Endothelial cell of umbilical vein (primary cell): ENCODE measurements at regions of chr16 and their contacts with region 1.

Region 1: GRCh38 chr16:24700549-24701392 is 28.7 kb upstream of the TNRC6A start:
- DNase-seq: peak; percentile 94
- H3K4me3 ChIP-seq: no peak overlapping the region
- H3K27ac ChIP-seq: peak overlapping the region; percentile 81
- H3K4me1 ChIP-seq: peaks cover 20% of the 10 kb centered on the region
- H3K27me3 ChIP-seq: no peaks in the 10 kb centered on the region
- CTCF ChIP-seq: peak; percentile 26 to 58
- POLR2A ChIP-seq: no peak

Region 2: GRCh38 chr16:24178496-24178895 is 522.3 kb before region 1 on chr16:
- CTCF ChIA-PET with region 1: no interaction called
- POLR2A ChIA-PET with region 1: no interaction called
- dilution Hi-C with region 1: no loop called
- intact Hi-C with region 1: no loop called
- DNase-seq: no peak
- H3K4me3 ChIP-seq: no peak overlapping the region
- H3K27ac ChIP-seq: no peak overlapping the region
- H3K4me1 ChIP-seq: no peaks in the 10 kb centered on the region
- H3K27me3 ChIP-seq: no peaks in the 10 kb centered on the region
- CTCF ChIP-seq: no peak
- POLR2A ChIP-seq: no peak

Region 3: DNA sequence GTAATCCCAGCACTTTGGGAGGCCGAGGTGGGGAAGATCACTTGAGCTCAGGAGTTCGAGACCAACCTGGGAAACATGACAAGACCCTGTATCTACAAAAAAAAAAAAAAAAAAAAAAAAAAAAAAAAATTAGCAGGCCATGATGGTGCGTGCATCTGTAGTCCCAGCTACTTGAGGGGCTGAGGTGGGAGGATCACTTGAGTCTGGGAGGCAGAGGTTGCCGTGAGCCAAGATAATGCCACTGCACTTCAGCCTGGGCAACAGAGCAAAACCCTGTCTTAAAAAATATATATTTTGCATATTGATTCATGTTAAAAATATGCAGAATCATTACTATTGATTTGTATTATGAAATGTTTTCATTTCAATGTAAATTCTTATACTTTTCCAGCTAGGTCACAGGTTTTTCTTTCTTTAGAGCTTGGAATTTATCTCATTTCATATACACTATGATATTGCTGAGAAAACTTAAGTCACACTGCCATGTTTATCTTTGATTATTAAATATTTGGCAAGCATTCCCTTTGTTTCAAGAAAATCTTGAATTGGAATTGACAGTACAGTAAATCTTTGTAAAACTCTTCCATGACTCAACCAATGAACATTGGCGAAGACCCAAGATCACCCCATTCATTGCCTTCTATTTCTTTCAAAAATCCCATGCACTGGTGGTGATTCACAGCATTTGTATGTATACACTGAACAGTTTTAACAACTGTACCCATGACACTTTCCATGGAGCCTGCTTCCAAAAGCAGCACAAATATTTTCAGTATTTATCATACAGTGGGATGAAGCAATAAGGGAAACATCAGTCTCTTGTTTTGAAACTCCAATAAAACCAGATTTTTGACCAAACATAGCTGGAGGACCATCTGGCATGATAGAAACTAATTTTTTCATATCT is 54.8 kb before region 1 on chr16:
- CTCF ChIA-PET with region 1: no interaction called
- POLR2A ChIA-PET with region 1: no interaction called
- dilution Hi-C with region 1: no loop called
- intact Hi-C with region 1: loop called (anchors 1 kb)
- DNase-seq: peak; percentile 99
- H3K4me3 ChIP-seq: no peak overlapping the region
- H3K27ac ChIP-seq: peak overlapping the region; percentile 71
- H3K4me1 ChIP-seq: peaks cover 14% of the 10 kb centered on the region
- H3K27me3 ChIP-seq: no peaks in the 10 kb centered on the region
- CTCF ChIP-seq: no peak
- POLR2A ChIP-seq: no peak

Region 4: DNA sequence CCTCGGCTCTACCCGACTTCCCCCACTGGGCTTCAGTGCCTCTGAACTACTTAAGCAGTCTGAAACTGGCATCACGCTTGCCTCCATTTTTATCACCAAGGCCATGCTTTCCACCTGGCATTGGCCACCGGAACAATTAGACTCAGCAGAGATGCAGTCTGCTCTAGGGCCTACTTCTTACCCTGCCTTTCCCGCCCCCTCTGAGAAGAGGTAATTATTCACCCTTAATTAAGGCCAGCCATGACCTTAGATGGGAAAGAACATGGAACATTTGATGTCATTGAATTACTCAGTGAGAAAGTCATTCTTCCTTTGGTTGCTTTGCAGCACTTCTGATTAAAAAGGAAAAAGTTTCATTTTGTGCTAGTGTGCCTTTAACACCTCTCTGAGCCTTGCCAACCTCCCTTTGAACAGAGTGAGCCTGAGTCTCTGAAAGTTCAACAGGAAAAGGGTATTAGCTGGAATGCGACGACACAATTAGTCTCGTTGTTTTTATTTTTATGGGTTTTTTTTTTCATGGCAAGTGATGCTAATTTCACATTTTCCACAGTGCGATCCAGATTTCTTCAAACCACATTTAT is 32.2 kb before region 1 on chr16:
- CTCF ChIA-PET with region 1: interaction called, 3 read pairs
- POLR2A ChIA-PET with region 1: interaction called, 3 read pairs
- dilution Hi-C with region 1: no loop called
- intact Hi-C with region 1: loop called (anchors 1 kb)
- DNase-seq: peak; percentile 87
- H3K4me3 ChIP-seq: no peak overlapping the region
- H3K27ac ChIP-seq: peak overlapping the region; percentile 85
- H3K4me1 ChIP-seq: peaks cover 14% of the 10 kb centered on the region
- H3K27me3 ChIP-seq: no peaks in the 10 kb centered on the region
- CTCF ChIP-seq: no peak
- POLR2A ChIP-seq: no peak

Region 5: DNA sequence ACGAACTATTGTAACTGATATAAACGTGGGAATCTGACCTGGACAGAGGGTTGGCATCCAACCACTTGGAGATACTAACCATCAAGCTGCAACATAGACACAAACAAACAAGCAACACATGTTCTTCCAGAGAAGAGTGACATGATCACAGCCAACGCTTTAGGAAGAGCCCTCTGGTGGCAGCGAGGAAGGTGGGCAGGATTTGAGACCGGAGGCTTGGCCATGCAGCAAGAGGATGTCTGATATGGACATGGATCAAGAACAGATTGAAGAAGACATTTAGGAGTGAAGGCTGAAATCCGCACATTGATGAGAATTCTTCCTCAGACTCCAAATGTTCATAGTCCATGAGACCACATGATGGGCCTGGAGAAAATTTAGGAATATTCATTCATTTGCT is 11.6 kb before region 1 on chr16:
- CTCF ChIA-PET with region 1: interaction called, 12 read pairs
- POLR2A ChIA-PET with region 1: no interaction called
- dilution Hi-C with region 1: no loop called
- intact Hi-C with region 1: loop called (anchors 2 kb)
- DNase-seq: peak; percentile 42
- H3K4me3 ChIP-seq: no peak overlapping the region
- H3K27ac ChIP-seq: no peak overlapping the region
- H3K4me1 ChIP-seq: peaks cover 14% of the 10 kb centered on the region
- H3K27me3 ChIP-seq: no peaks in the 10 kb centered on the region
- CTCF ChIP-seq: peak; percentile 56
- POLR2A ChIP-seq: no peak

Region 6: DNA sequence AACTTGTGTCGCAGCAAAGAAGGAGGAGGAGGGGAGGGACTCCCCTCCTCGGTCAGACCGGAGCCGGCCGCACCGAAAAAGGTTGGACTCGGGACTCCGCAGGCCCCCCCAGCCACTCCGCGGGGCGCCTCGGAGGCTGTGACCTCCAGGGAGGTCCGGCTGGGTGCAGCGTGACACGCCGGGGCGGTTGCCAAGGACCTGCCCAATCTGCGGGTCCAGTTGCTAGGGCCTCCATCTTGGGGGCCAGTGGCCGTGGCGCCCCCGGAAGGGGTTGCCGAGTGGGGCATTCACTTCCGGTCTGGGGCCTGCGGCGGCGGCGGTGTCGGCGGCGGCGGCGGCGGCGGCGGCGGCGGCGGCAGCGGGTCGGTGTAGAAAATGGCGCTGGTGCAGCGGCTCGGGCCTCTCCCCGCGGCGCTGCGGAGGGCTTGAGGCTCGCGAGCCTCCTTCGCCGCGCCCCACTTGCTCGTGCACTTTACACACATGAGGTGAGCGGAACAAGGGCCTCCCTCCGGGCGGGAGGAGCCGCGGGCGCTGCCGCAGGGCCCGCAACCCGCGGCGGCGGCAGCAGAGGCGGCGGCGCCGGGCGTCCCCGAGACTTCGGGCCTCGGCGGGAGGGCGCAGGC is 28.7 kb after region 1 on chr16 and contains the start of gene TNRC6A:
- CTCF ChIA-PET with region 1: interaction called, 3 read pairs
- POLR2A ChIA-PET with region 1: interaction called, 5 read pairs
- dilution Hi-C with region 1: no loop called
- intact Hi-C with region 1: loop called (anchors 1 kb)
- DNase-seq: peak; percentile 88
- H3K4me3 ChIP-seq: peak within 1 kb of the TSS; percentile 89 to 98 (median 96)
- H3K27ac ChIP-seq: peak within 1 kb of the TSS; percentile 82
- H3K4me1 ChIP-seq: peaks cover 22% of the 10 kb centered on the region
- H3K27me3 ChIP-seq: no peaks in the 10 kb centered on the region
- CTCF ChIP-seq: no peak
- POLR2A ChIP-seq: peak; percentile 69
- total RNA-seq, gene TNRC6A: 62.7 and 74.5 TPM in 2 replicates

Region 7: DNA sequence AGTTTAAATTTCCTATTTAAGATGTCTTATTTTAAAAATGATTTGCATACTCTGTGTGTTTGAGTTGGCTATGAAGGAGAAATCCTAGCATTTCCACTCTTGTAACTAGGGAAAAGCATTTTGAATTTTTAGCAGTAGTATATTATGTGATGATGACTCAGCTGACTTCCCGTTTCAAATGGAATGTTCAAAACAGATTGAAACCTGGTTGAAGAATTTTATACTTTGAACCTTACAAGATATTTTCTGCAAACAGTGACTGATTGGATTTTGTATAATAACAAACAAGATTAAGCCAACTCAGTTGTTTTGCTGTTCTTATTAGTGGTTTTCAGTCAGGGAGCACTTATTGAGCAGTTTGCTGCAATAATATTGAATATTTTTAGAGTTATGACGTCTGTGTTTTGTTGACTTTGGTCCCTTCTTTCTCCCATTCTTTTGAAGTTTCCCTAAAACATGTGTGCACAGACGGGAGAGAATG is 36.7 kb after region 1 on chr16:
- CTCF ChIA-PET with region 1: interaction called, 3 read pairs
- POLR2A ChIA-PET with region 1: interaction called, 4 read pairs
- dilution Hi-C with region 1: no loop called
- intact Hi-C with region 1: loop called (anchors 2 kb)
- DNase-seq: peak; percentile 83
- H3K4me3 ChIP-seq: peak overlapping the region in 1 of 3 experiments; percentile 20
- H3K27ac ChIP-seq: peak overlapping the region; percentile 63
- H3K4me1 ChIP-seq: peaks cover 37% of the 10 kb centered on the region
- H3K27me3 ChIP-seq: no peaks in the 10 kb centered on the region
- CTCF ChIP-seq: no peak
- POLR2A ChIP-seq: no peak